Activated CD8-positive, alpha-beta T cell treated with anti-CD3 and anti-CD28 coated beads, Interleukin-2, amount 10 ng/mL, durations not matched to agents 7 days and 5 days (primary cell): ENCODE measurements at regions of chr15 and their contacts with region 1.

Region 1: GRCh38 chr15:74635228-74635627 is 19.6 kb downstream of the CLK3 start:
- DNase-seq: peak; percentile 83
- ATAC-seq: peak; percentile 87
- H3K4me3 Mint-ChIP-seq: no peak overlapping the region
- H3K27ac Mint-ChIP-seq: no peak overlapping the region
- H3K4me1 Mint-ChIP-seq: no peaks in the 10 kb centered on the region
- H3K27me3 Mint-ChIP-seq: no peaks in the 10 kb centered on the region

Region 2: GRCh38 chr15:74373731-74374647 is 261.2 kb before region 1 on chr15:
- CTCF ChIA-PET with region 1: interaction called, 82 read pairs
- POLR2A ChIA-PET with region 1: no interaction called
- DNase-seq: peak; percentile 97
- ATAC-seq: peak; percentile 97
- H3K4me3 Mint-ChIP-seq: peak overlapping the region; percentile 77
- H3K27ac Mint-ChIP-seq: peak overlapping the region; percentile 75
- H3K4me1 Mint-ChIP-seq: peaks cover 25% of the 10 kb centered on the region
- H3K27me3 Mint-ChIP-seq: peaks cover 18% of the 10 kb centered on the region

Region 3: DNA sequence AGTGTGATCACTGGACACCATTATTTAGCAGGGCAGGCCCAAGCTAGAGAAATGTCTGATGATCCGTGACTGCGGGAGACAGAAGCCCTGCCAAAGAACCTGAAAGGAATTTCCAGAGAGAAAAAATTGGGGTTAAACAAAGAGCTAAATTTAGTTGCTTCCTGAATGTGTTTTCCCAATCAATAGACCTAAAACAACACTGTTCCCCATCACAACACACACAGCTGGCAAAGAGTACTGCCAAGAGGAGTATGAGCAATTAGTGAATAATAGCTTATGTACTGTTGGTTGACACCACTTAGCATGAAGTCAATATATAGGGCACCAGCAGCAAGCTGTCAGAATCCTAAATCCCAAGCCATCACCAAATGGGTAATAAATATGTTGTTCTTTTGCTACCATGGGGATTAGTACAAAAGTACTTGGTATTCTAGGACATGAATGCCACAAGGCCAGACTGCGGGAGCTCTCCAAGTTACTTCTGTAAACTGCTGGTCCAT is 16.1 kb after region 1 on chr15:
- CTCF ChIA-PET with region 1: interaction called, 21 read pairs
- POLR2A ChIA-PET with region 1: no interaction called
- DNase-seq: no peak
- ATAC-seq: no peak
- H3K4me3 Mint-ChIP-seq: no peak overlapping the region
- H3K27ac Mint-ChIP-seq: no peak overlapping the region
- H3K4me1 Mint-ChIP-seq: peaks cover 14% of the 10 kb centered on the region
- H3K27me3 Mint-ChIP-seq: no peaks in the 10 kb centered on the region

Region 4: DNA sequence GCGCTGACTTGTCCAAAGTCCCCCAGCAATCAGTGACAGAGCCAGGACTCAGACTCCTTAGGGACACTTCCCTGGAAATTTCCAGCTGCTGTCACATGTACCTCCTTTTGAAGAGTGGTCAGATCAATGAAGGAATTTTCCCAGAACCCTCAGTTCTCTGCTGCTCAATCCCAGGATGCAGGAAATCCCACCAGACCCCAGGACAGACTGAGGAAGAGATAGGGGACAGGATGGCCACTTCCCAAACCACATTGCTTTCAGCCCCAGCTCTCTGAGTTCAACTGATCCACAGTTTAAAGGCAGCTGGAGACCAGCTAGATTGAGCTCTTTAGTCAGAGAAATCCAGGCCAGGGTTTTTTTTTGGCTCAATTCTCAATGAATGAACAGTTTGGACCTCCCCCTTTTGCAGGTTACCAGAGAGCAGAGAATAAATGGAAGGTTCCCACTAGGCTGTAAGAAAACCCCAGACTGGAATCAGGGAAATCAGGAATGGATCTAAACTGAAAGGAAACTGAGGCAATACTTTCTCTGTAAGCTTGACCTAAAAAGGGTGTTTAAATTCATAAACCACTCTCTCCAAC is 88.6 kb after region 1 on chr15:
- CTCF ChIA-PET with region 1: interaction called, 17 read pairs
- POLR2A ChIA-PET with region 1: no interaction called
- DNase-seq: no peak
- ATAC-seq: no peak
- H3K4me3 Mint-ChIP-seq: peak overlapping the region; percentile 20
- H3K27ac Mint-ChIP-seq: no peak overlapping the region
- H3K4me1 Mint-ChIP-seq: peaks cover 27% of the 10 kb centered on the region
- H3K27me3 Mint-ChIP-seq: peaks cover 5% of the 10 kb centered on the region

Region 5: GRCh38 chr15:74787251-74788041 is 152.2 kb after region 1 on chr15:
- CTCF ChIA-PET with region 1: interaction called, 60 read pairs
- POLR2A ChIA-PET with region 1: no interaction called
- DNase-seq: peak; percentile 97
- ATAC-seq: peak; percentile 72
- H3K4me3 Mint-ChIP-seq: peak overlapping the region; percentile 90
- H3K27ac Mint-ChIP-seq: peak overlapping the region; percentile 99
- H3K4me1 Mint-ChIP-seq: peaks cover 66% of the 10 kb centered on the region
- H3K27me3 Mint-ChIP-seq: no peaks in the 10 kb centered on the region

Region 6: DNA sequence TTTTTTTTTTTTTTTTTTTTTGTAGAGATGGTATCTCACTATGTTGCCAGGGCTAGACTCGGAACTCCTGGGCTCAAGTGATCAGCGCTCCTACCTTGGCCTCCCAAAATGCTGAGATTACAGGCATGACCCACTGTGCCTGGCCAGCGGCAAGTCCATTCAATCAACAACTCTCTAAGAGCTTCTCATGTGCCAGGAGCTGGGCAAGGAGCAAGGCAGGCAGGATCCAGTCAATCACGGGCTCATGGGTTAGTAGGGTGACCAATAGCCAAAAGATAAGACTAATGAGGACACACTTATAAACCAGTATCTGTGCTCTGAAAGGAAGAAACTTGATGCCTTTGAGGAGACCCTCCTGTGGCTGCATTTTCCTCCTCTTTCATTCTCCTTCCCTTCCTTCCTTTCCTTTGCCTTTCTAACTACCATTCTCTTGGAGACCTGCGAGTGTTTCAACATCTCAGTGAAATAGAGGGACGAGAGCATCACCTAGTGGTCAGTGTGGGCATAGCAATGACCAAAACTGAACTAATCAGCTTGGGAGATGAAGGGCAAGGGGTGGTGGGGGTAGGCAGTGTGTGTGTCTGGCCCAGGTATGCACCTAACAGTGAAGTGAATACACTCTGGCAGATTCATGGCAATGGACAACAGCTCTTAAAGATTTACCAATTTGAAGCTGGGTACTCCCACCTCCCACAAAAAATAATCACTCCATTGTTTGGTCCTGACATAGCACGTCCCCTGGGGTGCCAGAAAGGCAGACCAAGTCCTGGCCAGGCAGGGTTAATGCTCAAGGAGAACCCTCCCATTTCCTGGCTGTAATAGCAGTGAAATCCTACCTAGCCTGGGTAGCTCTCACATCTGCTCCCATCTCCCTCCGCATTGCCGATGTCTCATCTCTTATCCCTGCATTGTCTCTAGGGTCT is 315.1 kb after region 1 on chr15:
- CTCF ChIA-PET with region 1: interaction called, 10 read pairs
- POLR2A ChIA-PET with region 1: no interaction called
- DNase-seq: peak; percentile 85
- ATAC-seq: peak; percentile 88
- H3K4me3 Mint-ChIP-seq: no peak overlapping the region
- H3K27ac Mint-ChIP-seq: no peak overlapping the region
- H3K4me1 Mint-ChIP-seq: peaks cover 11% of the 10 kb centered on the region
- H3K27me3 Mint-ChIP-seq: peaks cover 6% of the 10 kb centered on the region